ENCODE measurements at regions of chr5 and their contacts with region 1.

Region 1: DNA sequence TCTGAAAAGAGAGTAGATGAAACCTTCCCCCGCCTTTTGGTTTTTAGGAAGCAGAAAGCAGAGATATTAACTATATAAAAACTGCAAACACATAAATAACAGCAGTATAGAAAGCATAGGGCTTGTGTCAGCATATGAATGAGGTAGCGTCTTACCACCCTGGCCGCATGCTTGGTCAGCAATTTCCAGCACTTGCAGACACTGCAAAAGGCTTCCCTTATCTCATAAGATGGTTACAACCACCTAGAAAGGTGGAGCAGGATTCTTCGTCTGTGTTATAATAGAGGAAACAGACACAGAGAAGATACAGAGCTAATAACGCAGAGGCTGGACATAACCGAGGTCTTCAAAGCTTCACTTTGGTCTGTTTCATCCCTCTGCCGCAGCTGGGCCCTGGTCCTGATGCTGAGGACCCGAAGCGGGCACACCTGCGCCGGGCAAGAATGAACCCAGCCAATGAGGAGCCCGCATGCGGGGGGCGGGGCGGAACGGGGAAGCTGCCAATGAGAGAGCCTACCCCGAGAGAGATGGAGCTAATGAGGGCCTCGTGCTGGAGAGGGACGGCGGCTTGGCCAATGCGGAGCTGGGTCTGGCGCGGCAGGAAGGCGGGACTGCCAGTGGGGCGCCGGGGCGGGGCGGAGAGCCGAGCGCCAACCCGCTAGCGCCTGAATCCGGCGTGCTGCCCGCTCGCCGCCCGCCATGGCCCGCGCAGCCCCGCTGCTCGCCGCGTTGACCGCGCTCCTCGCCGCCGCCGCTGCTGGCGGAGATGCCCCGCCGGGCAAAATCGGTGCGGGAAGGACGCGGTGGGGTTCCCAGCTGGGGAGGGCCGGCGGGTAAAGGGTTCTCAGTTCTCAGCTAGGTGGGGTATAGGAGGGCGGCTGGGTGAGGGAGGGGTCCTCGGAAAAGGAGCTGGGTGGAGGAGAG is at the start of gene PCYOX1L:
- DNase-seq: peak; percentile 94
- H3K4me3 ChIP-seq: peak within 1 kb of the TSS; percentile 60 to 61
- H3K27ac ChIP-seq: peak within 1 kb of the TSS; percentile 28 to 47
- H3K4me1 ChIP-seq: no peaks in the 10 kb centered on the region
- H3K27me3 ChIP-seq: no peaks in the 10 kb centered on the region
- CTCF ChIP-seq: peak in 1 of 4 experiments; percentile 4
- POLR2A ChIP-seq: no peak
- total RNA-seq, gene PCYOX1L: 7.7 to 20.7 TPM

Region 2: GRCh38 chr5:149268928-149269557 is 88.6 kb before region 1 on chr5:
- intact Hi-C with region 1: loop called (anchors 5 kb)
- DNase-seq: no peak
- H3K4me3 ChIP-seq: no peak overlapping the region
- H3K27ac ChIP-seq: no peak overlapping the region
- H3K4me1 ChIP-seq: no peaks in the 10 kb centered on the region
- H3K27me3 ChIP-seq: no peaks in the 10 kb centered on the region
- CTCF ChIP-seq: peak; percentile 58 to 87 (median 72)
- POLR2A ChIP-seq: no peak

Region 3: DNA sequence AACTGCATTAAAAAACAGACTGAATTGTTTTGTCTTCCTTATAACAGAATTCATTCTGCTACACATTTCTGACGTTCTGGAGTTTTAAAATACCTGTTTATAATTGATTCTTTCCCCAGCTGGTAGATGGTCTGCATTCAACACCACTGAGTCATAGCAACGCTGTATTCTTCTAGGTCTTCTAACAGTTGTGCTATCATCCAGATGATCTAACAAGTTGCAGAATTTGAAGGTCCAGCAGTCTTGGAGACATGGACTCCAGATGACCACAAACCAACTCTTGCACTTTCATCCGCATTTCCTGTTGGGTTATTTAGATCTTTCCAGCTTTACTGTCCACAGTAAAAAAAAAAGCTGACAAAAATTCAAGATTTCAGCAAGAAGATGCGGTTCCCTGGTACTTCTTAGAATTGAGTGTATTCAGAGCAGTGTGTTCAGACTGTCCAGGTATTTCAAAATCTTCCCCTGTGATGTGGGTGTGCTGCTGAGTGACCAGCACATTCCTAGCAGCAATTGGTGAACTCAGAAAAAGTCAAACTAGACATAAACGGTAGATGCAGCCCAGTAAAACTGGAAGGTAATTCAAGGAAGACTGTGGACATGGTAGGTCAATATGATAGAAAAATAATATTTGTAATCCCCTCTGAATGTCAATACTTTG is 143.4 kb after region 1 on chr5:
- intact Hi-C with region 1: no loop called
- DNase-seq: no peak
- H3K4me3 ChIP-seq: no peak overlapping the region
- H3K27ac ChIP-seq: peak overlapping the region in 1 of 2 donors; percentile 1
- H3K4me1 ChIP-seq: peaks cover 5% of the 10 kb centered on the region
- H3K27me3 ChIP-seq: no peaks in the 10 kb centered on the region
- CTCF ChIP-seq: no peak
- POLR2A ChIP-seq: no peak

Measured in prostate gland (tissue), 2 donors.